ENCODE measurements at regions of chr7 and their contacts with region 1.

Region 1: GRCh38 chr7:89887489-89887888 is 266.8 kb upstream of the STEAP1 start:
- DNase-seq: no peak
- H3K4me3 ChIP-seq: no peak overlapping the region
- H3K27ac ChIP-seq: no peak overlapping the region
- H3K4me1 ChIP-seq: no peaks in the 10 kb centered on the region
- H3K27me3 ChIP-seq: no peaks in the 10 kb centered on the region
- CTCF ChIP-seq: no peak
- EP300 ChIP-seq: no peak
- POLR2A ChIP-seq: no peak

Region 2: GRCh38 chr7:89145801-89146200 is 741.7 kb before region 1 on chr7:
- intact Hi-C with region 1: no loop called
- DNase-seq: no peak
- H3K4me3 ChIP-seq: no peak overlapping the region
- H3K27ac ChIP-seq: no peak overlapping the region
- H3K4me1 ChIP-seq: no peaks in the 10 kb centered on the region
- H3K27me3 ChIP-seq: no peaks in the 10 kb centered on the region
- CTCF ChIP-seq: no peak
- EP300 ChIP-seq: no peak
- POLR2A ChIP-seq: no peak

Region 3: GRCh38 chr7:90349305-90349704 is 461.8 kb after region 1 on chr7:
- intact Hi-C with region 1: no loop called
- DNase-seq: no peak
- H3K4me3 ChIP-seq: no peak overlapping the region
- H3K27ac ChIP-seq: no peak overlapping the region
- H3K4me1 ChIP-seq: peaks cover 4% of the 10 kb centered on the region
- H3K27me3 ChIP-seq: no peaks in the 10 kb centered on the region
- CTCF ChIP-seq: no peak
- EP300 ChIP-seq: no peak
- POLR2A ChIP-seq: no peak

Region 4: GRCh38 chr7:90396420-90396819 is 508.9 kb after region 1 on chr7:
- intact Hi-C with region 1: loop called in 1 of 4 experiments (anchors 10 kb)
- DNase-seq: no peak
- H3K4me3 ChIP-seq: no peak overlapping the region
- H3K27ac ChIP-seq: no peak overlapping the region
- H3K4me1 ChIP-seq: no peaks in the 10 kb centered on the region
- H3K27me3 ChIP-seq: no peaks in the 10 kb centered on the region
- CTCF ChIP-seq: no peak
- EP300 ChIP-seq: no peak
- POLR2A ChIP-seq: no peak

Measured in ovary (tissue), 10 donors.